IMR-90 (cell line): ENCODE measurements at regions of chr9 and their contacts with region 1.

Region 1: DNA sequence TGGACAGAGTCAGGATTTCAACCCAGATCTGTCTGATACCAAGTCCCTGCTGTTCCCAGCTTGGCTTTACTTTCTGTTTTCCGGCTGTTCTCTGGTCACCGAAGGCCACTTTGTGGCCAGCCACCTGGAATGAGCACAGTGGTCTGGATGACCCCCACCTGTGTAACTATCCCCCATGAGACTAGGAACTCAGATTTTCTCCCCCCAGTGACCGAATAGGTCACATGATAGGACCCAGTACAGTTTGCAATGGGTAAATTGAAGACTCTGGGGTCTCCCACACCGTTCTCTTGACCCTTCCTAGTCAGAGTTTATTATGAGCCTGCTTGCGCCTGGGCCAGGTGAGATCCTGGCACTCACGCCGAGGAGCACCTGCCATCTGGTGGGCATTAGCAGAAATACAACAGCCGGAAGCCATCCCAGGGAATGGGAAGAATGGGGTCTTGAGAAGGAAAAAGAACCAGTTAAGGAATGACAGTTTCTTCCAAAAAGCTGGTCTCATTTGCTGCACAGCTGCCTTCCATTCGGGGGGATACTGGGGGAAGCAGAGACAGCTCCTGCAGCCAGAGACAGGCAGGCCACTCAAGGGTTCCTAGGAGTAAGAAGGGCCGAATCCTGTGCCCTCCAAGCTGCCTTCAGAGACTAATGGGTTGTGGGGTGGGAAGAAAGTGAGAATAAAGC is 7.1 kb downstream of the PHYHD1 start:
- DNase-seq: peak; percentile 47
- ATAC-seq: peak; percentile 94
- H3K4me3 ChIP-seq: no peak overlapping the region
- H3K27ac ChIP-seq: no peak overlapping the region
- H3K4me1 ChIP-seq: no peaks in the 10 kb centered on the region
- H3K27me3 ChIP-seq: no peaks in the 10 kb centered on the region
- CTCF ChIP-seq: peak; percentile 86
- POLR2A ChIP-seq: peak; percentile 30; the same call in 1 of the 2 replicates
- RAD21 ChIP-seq: peak; percentile 93

Region 2: GRCh38 chr9:128635283-128636023 is 292.4 kb before region 1 on chr9:
- CTCF ChIA-PET with region 1: no interaction called
- POLR2A ChIA-PET with region 1: no interaction called
- dilution Hi-C with region 1: no loop called
- in situ Hi-C with region 1: no loop called
- intact Hi-C with region 1: loop called (anchors 2 kb)
- DNase-seq: peak; percentile 94
- ATAC-seq: peak; percentile 92
- H3K4me3 ChIP-seq: no peak overlapping the region
- H3K27ac ChIP-seq: peak overlapping the region; percentile 98
- H3K4me1 ChIP-seq: peaks cover 13% of the 10 kb centered on the region
- H3K27me3 ChIP-seq: no peaks in the 10 kb centered on the region
- CTCF ChIP-seq: peak; percentile 90
- POLR2A ChIP-seq: no peak
- RAD21 ChIP-seq: peak; percentile 82

Region 3: DNA sequence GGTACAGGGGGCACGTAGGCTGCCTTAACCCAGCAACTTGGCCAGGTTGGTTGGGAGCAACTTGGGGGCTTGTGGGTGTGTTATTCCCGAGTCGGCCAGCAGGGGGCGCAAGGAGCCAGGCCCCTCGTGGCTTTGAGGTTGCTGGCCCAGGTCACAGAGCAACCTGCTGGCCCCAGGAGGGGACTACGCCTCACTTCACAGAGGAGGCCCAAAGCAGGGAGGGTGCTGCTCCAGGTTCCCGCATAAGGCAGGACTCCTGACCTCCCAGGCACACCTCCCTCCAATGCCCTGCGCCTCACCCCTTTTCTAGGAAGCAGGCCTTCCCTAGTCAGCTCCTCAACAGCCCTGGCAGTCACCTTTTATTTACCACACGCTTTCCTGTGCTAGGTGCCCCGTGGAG is 64.2 kb before region 1 on chr9:
- CTCF ChIA-PET with region 1: interaction called, 8 read pairs
- POLR2A ChIA-PET with region 1: no interaction called
- dilution Hi-C with region 1: no loop called
- in situ Hi-C with region 1: loop called (anchors 5 kb)
- intact Hi-C with region 1: loop called (anchors 1 kb)
- DNase-seq: peak; percentile 36
- ATAC-seq: peak; percentile 96
- H3K4me3 ChIP-seq: no peak overlapping the region
- H3K27ac ChIP-seq: no peak overlapping the region
- H3K4me1 ChIP-seq: no peaks in the 10 kb centered on the region
- H3K27me3 ChIP-seq: no peaks in the 10 kb centered on the region
- CTCF ChIP-seq: peak; percentile 82
- POLR2A ChIP-seq: no peak
- RAD21 ChIP-seq: peak; percentile 83

Region 4: DNA sequence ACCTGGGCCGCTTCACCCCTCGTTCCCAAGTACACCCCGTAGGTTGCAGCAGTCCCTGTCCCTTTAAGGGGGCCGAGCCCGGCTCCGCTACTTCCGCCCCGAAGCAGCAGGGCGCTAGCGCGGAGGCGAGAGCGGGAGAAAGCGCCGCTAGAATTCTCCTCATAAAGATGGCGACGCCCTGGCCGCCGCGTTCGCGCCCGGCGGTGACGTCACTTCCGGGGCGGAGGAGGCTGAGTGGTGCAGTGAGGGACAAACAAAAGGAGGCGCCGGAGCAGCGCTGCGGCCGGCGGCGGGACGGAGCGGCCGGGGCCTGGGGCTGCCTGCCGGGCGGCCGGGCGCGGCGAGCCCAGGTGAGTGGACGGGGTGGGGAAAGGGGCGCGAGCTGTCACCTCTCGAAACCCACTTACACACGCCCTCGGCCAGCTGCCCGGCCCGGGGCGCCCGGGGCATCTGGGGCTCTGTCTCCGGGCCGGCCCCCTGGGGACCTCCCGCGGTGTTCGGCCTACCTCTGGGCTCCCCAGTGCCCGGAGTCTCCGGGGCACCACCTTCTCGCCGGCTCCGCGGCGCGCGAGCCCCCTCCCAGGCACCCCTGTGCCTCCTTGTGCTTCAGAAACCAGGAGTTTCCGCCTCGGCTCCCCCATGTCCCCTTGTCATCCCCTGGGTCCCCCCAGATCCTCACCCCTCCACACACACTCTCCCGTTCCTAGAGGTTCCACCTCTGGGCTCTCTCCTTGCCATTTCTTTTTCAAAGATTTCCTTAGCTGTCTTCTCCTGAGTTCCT is 45.8 kb before region 1 on chr9 and contains the starts of genes KYAT1 and LRRC8A:
- CTCF ChIA-PET with region 1: interaction called, 3 read pairs
- POLR2A ChIA-PET with region 1: no interaction called
- dilution Hi-C with region 1: no loop called
- in situ Hi-C with region 1: no loop called
- intact Hi-C with region 1: loop called (anchors 1 kb)
- DNase-seq: peak; percentile 93
- ATAC-seq: peak; percentile 88
- H3K4me3 ChIP-seq: peak within 1 kb of the TSS; percentile 78
- H3K27ac ChIP-seq: peak within 1 kb of the TSS; percentile 91
- H3K4me1 ChIP-seq: peaks cover 8% of the 10 kb centered on the region
- H3K27me3 ChIP-seq: no peaks in the 10 kb centered on the region
- CTCF ChIP-seq: 0 out of 2 replicates have a peak, but pooled peaks have one; percentile 17
- POLR2A ChIP-seq: peak; percentile 95
- RAD21 ChIP-seq: no peak
- total RNA-seq, gene KYAT1: 5.8 and 6.8 TPM in 2 replicates
- total RNA-seq, gene LRRC8A: 42.8 and 45.8 TPM in 2 replicates